ENCODE measurements at regions of chr14 and their contacts with region 1.

Region 1: GRCh38 chr14:22713631-22713950 is 52.9 kb upstream of the OXA1L start:
- DNase-seq: no peak
- H3K4me3 ChIP-seq: peak overlapping the region in 1 of 3 experiments; percentile 13
- H3K27ac ChIP-seq: peak overlapping the region; percentile 28
- H3K4me1 ChIP-seq: peaks cover 23% of the 10 kb centered on the region
- H3K27me3 ChIP-seq: no peaks in the 10 kb centered on the region
- CTCF ChIP-seq: no peak
- POLR2A ChIP-seq: no peak

Region 2: DNA sequence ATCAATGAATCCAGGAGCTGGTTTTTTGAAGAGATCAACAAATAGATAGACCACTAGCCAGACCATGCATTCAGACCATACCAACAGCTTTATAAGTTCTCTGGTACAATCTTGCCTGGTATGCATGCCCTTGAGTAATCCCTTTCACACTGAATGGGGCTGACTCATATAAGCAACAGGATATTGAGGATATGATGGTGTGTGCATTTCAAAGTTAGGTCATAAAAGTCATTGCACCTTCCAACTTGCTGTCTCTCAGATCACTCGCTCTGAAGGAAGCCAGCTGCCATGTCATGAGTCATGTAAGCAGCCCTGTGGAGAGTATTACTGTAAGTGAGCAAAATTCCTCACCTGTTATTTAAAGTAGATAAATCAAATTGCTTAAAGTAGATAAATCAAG is 24.4 kb before region 1 on chr14:
- CTCF ChIA-PET with region 1: interaction called, 5 read pairs
- POLR2A ChIA-PET with region 1: no interaction called
- dilution Hi-C with region 1: no loop called
- intact Hi-C with region 1: loop called (anchors 1 kb)
- DNase-seq: peak; percentile 96
- H3K4me3 ChIP-seq: no peak overlapping the region
- H3K27ac ChIP-seq: peak overlapping the region; percentile 91
- H3K4me1 ChIP-seq: peaks cover 32% of the 10 kb centered on the region
- H3K27me3 ChIP-seq: no peaks in the 10 kb centered on the region
- CTCF ChIP-seq: no peak
- POLR2A ChIP-seq: peak; percentile 40

Region 3: GRCh38 chr14:22699801-22700564 is 13.6 kb before region 1 on chr14:
- CTCF ChIA-PET with region 1: interaction called, 6 read pairs
- POLR2A ChIA-PET with region 1: interaction called, 11 read pairs
- dilution Hi-C with region 1: no loop called
- intact Hi-C with region 1: no loop called
- DNase-seq: peak; percentile 80
- H3K4me3 ChIP-seq: no peak overlapping the region
- H3K27ac ChIP-seq: peak overlapping the region; percentile 57
- H3K4me1 ChIP-seq: peaks cover 23% of the 10 kb centered on the region
- H3K27me3 ChIP-seq: no peaks in the 10 kb centered on the region
- CTCF ChIP-seq: no peak
- POLR2A ChIP-seq: peak; percentile 62

Region 4: GRCh38 chr14:22739423-22739822 is 25.8 kb after region 1 on chr14:
- CTCF ChIA-PET with region 1: interaction called, 5 read pairs
- POLR2A ChIA-PET with region 1: no interaction called
- dilution Hi-C with region 1: no loop called
- intact Hi-C with region 1: loop called (anchors 1 kb)
- DNase-seq: peak; percentile 88
- H3K4me3 ChIP-seq: no peak overlapping the region
- H3K27ac ChIP-seq: peak overlapping the region; percentile 97
- H3K4me1 ChIP-seq: peaks cover 30% of the 10 kb centered on the region
- H3K27me3 ChIP-seq: no peaks in the 10 kb centered on the region
- CTCF ChIP-seq: no peak
- POLR2A ChIP-seq: no peak

Measured in endothelial cell of umbilical vein (primary cell).